ENCODE measurements at regions of chr1 and their contacts with region 1.

Region 1: DNA sequence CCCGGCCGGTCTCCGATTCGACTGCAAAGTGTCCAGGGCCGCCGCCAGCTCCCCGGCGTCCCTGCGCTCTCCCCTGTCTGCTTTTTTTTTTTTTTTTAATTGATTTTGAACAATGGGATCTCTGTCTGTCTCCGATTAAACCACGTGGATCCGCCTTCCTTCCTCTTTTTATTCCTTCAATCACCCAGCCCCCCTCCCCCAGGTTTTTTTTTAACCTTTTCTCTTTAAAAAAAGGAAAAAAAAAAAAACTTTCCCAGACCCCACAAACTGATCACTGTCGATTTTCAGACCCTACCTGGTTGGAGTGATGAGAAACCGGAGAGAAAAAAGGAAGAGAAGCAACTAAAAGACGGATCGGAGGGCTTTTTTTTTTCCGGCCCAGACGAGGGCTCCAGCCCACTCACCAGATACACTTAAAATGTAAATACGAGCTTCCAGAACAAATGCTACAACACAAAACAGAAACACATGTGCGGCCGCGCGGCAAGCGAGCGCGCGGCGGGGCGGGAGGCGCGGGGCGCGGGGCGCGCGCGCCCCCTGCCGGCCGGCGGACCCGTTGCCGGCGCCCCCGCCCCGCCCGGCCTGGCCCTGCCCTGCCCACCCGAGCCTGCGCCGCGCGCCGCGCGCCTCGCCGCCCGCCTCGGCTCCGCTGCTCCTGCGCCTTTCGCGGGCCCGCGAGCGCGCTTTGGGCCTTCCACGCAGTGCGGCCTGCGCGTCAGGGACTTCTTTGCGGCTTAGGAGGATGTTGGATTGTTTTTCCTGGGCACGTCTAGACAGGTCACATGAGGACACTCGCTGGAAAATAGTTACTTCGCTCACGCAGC is at the start of gene RCC2:
- DNase-seq: peak; percentile 69
- H3K4me3 ChIP-seq: peak within 1 kb of the TSS; percentile 66 to 100 (median 96)
- H3K27ac ChIP-seq: peak within 1 kb of the TSS; percentile 83
- H3K4me1 ChIP-seq: peaks cover 15% of the 10 kb centered on the region
- H3K27me3 ChIP-seq: peaks cover 0 to 7% of the 10 kb centered on the region in 2 experiments
- CTCF ChIP-seq: peak in 1 of 2 donors; percentile 5
- POLR2A ChIP-seq: no peak
- total RNA-seq, gene RCC2: 160 and 166 TPM in 2 replicates

Region 2: DNA sequence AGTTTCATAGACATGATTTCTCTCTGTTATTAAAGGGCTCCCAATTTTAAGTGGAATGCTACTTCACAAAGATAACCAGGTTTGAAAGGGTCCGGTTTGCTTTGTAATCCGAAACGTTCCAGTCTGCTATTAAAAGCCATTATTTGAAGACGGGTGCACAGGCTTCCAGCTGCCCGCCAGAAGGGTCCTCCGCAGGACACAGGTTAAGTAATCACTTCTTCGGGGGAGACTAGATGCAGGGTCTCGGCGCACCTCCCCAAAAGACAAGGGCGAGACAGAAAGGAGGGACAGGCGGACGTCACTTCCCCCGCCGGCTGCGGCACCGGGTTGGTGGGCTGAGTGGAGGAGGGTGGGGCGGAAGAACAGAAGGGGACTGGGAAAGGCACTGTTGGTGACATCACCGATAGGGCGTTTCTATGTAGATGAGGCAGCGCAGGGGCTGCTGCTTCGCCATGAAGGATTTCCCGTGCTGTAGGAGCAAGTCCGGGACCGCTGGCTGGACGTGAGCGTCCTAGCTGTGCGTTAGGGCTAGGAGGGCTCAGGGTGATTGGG is 534.8 kb before region 1 on chr1:
- CTCF ChIA-PET with region 1: no interaction called
- POLR2A ChIA-PET with region 1: no interaction called
- dilution Hi-C with region 1: no loop called
- intact Hi-C with region 1: loop called (anchors 2 kb)
- DNase-seq: peak; percentile 99
- H3K4me3 ChIP-seq: peak overlapping the region; percentile 29 to 67 (median 34)
- H3K27ac ChIP-seq: peak overlapping the region; percentile 92
- H3K4me1 ChIP-seq: peaks cover 19% of the 10 kb centered on the region
- H3K27me3 ChIP-seq: no peaks in the 10 kb centered on the region
- CTCF ChIP-seq: no peak
- POLR2A ChIP-seq: no peak

Region 3: DNA sequence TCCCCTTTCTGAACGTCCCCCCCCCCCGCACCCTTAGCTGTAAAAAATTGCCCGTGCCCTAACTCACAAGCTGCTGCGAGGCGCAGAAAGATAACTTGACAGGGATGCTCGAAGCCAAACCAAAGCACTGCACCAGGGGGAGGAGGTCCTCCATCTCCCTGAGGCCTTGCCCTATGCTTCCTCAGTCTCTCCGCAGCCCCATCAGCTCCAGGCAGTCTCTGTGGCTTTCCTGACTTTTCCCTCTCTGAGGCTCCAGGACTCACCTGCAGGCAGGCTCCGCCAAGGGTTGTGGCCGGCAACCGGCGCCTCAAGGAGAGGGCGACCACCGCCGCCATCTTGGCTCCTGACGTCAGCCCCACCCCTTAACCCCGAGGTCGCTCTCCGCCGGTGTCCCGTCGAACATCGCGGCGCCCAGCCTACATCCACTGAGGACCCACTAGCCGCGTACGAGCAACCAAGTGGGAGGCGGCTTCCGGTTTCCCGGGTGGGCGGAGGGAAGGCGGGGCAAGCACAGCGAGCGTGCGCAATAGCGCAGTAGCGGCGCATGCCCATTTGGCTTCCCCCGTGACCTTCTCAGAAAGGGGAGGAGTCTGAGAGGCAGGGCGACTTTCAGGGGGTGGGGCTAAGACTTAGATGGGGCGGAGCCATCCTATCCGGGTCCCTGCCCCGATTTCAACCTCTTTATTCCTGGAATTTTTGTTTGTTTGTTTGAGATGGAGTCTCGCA is 385.6 kb before region 1 on chr1 and contains the start of gene SDHB:
- CTCF ChIA-PET with region 1: no interaction called
- POLR2A ChIA-PET with region 1: no interaction called
- dilution Hi-C with region 1: no loop called
- intact Hi-C with region 1: loop called (anchors 10 kb)
- DNase-seq: peak; percentile 100
- H3K4me3 ChIP-seq: peak within 1 kb of the TSS; percentile 67 to 85 (median 83)
- H3K27ac ChIP-seq: peak within 1 kb of the TSS; percentile 62
- H3K4me1 ChIP-seq: peaks cover 8% of the 10 kb centered on the region
- H3K27me3 ChIP-seq: no peaks in the 10 kb centered on the region
- CTCF ChIP-seq: no peak
- POLR2A ChIP-seq: peak; percentile 84
- total RNA-seq, gene SDHB: 90.3 and 96.2 TPM in 2 replicates

Region 4: GRCh38 chr1:17393230-17393629 is 46.2 kb before region 1 on chr1:
- CTCF ChIA-PET with region 1: no interaction called
- POLR2A ChIA-PET with region 1: no interaction called
- dilution Hi-C with region 1: no loop called
- intact Hi-C with region 1: no loop called
- DNase-seq: no peak
- H3K4me3 ChIP-seq: no peak overlapping the region
- H3K27ac ChIP-seq: no peak overlapping the region
- H3K4me1 ChIP-seq: no peaks in the 10 kb centered on the region
- H3K27me3 ChIP-seq: no peaks in the 10 kb centered on the region
- CTCF ChIP-seq: no peak
- POLR2A ChIP-seq: no peak

Region 5: GRCh38 chr1:17419626-17420328 is 19.7 kb before region 1 on chr1:
- CTCF ChIA-PET with region 1: interaction called, 3 read pairs
- POLR2A ChIA-PET with region 1: no interaction called
- dilution Hi-C with region 1: no loop called
- intact Hi-C with region 1: loop called (anchors 1 kb)
- DNase-seq: peak; percentile 57
- H3K4me3 ChIP-seq: no peak overlapping the region
- H3K27ac ChIP-seq: no peak overlapping the region
- H3K4me1 ChIP-seq: no peaks in the 10 kb centered on the region
- H3K27me3 ChIP-seq: no peaks in the 10 kb centered on the region
- CTCF ChIP-seq: peak; percentile 99
- POLR2A ChIP-seq: no peak

Region 6: GRCh38 chr1:17475729-17476128 is 36.3 kb after region 1 on chr1:
- CTCF ChIA-PET with region 1: interaction called, 5 read pairs
- POLR2A ChIA-PET with region 1: no interaction called
- dilution Hi-C with region 1: no loop called
- intact Hi-C with region 1: loop called (anchors 2 kb)
- DNase-seq: no peak
- H3K4me3 ChIP-seq: no peak overlapping the region
- H3K27ac ChIP-seq: no peak overlapping the region
- H3K4me1 ChIP-seq: no peaks in the 10 kb centered on the region
- H3K27me3 ChIP-seq: peaks cover 0 to 2% of the 10 kb centered on the region in 2 experiments
- CTCF ChIP-seq: no peak
- POLR2A ChIP-seq: no peak

Measured in endothelial cell of umbilical vein (primary cell).